Dendritic cell treated with granulocyte-macrophage colony-stimulating factor and Interleukin-4, amounts not matched to agents 40 ng/mL and 50 ng/mL, for 4 days (primary cell): ENCODE measurements at regions of chrX and their contacts with region 1.

Region 1: DNA sequence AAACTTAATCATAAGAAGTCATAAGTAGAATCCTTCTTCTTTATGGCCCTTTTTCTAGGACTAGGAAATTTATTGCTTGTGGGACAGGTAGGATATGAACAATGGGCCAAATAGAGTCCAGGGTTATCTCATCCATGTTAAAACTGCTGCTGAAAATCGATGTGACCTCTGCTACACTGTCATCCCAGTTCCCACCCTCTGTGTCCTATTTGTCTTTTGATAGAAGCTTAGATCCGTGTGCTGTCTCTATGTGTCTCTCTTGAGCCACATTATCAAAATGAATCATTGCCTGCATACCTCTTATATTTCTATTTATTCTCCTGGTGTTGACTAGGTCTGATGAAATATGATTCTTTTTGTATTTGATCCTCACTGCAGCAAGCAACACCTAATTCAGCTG is 661.4 kb downstream of the DACH2 start:
- H3K4me3 Mint-ChIP-seq: no peak overlapping the region
- H3K27ac Mint-ChIP-seq: no peak overlapping the region
- H3K4me1 Mint-ChIP-seq: no peaks in the 10 kb centered on the region
- H3K27me3 Mint-ChIP-seq: no peaks in the 10 kb centered on the region

Region 2: GRCh38 chrX:86747091-86747490 is 62.6 kb before region 1 on chrX:
- intact Hi-C with region 1: loop called (anchors 10 kb)
- H3K4me3 Mint-ChIP-seq: no peak overlapping the region
- H3K27ac Mint-ChIP-seq: no peak overlapping the region
- H3K4me1 Mint-ChIP-seq: no peaks in the 10 kb centered on the region
- H3K27me3 Mint-ChIP-seq: no peaks in the 10 kb centered on the region